AG04450 (cell line): ENCODE measurements at regions of chr2 and their contacts with region 1.

Region 1: DNA sequence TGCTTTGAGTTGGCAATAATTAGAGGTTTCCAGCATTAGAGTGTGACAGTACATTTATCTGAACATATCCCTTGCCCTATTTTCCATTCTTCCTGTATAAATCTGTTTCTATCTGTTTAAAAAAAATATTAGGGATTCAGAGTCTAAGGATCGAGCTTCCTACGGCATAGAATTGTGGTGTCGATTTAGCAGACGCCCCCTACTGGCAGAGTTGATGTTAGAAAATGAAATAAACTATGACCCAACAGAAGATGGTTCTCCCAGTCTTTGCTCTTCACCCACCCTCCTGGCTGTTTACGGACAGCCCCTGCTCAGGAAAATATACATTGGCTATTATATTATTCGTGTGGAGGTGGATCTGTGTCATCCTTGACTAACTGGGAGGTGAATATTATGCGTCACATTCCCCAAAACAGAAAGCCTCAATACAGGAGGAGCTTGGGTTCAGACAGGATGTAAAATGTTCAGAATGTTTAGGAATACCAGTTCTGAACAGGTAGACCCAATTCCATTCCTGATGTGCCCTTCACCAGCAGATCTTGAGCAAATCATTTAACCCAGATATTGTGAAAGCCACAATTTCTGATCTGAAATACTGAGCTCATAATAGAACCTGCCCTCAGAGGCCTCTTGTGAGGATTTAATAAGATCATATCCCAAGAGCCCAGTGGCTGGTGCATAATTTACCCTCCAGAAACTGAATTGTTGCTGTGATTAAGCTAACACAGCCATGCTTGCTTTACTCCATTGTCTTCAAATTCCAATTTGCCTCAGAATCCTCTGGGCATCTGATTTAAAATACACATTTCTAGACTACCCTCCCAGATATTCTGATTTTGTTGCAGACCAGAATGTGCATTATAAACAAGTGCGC is 10.8 kb upstream of the ERMN start:
- DNase-seq: no peak
- H3K4me3 ChIP-seq: no peak overlapping the region
- H3K27ac ChIP-seq: no peak overlapping the region
- H3K27me3 ChIP-seq: no peaks in the 10 kb centered on the region
- CTCF ChIP-seq: peak; percentile 76

Region 2: GRCh38 chr2:157283468-157283867 is 52.9 kb before region 1 on chr2:
- CTCF ChIA-PET with region 1: interaction called, 11 read pairs
- POLR2A ChIA-PET with region 1: no interaction called
- DNase-seq: no peak
- H3K4me3 ChIP-seq: no peak overlapping the region
- H3K27ac ChIP-seq: no peak overlapping the region
- H3K27me3 ChIP-seq: no peaks in the 10 kb centered on the region
- CTCF ChIP-seq: no peak

Region 3: GRCh38 chr2:157321466-157321865 is 14.9 kb before region 1 on chr2:
- CTCF ChIA-PET with region 1: interaction called, 166 read pairs
- POLR2A ChIA-PET with region 1: no interaction called
- DNase-seq: no peak
- H3K4me3 ChIP-seq: no peak overlapping the region
- H3K27ac ChIP-seq: no peak overlapping the region
- H3K27me3 ChIP-seq: no peaks in the 10 kb centered on the region
- CTCF ChIP-seq: no peak

Region 4: DNA sequence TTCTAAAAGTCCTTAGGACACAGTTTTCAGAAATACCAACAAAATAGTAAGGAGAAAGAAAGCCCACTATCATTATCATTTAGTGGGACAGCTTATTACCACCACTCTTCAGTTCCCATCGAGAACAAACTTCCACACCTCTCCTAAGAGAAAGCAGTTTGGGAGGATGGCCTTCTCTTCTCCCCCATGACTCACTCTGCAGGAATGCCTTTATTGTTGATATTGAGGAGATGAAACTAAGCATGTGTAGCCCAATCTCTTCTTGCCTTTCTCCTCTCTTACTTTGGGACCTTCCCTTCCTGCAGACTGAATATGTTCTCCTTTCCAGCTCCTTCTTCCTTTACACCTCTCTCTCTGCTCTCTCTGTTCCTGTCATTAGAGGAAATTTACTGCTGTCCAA is 19.2 kb after region 1 on chr2:
- CTCF ChIA-PET with region 1: interaction called, 96 read pairs
- POLR2A ChIA-PET with region 1: no interaction called
- DNase-seq: no peak
- H3K4me3 ChIP-seq: no peak overlapping the region
- H3K27ac ChIP-seq: no peak overlapping the region
- H3K27me3 ChIP-seq: no peaks in the 10 kb centered on the region
- CTCF ChIP-seq: no peak